AG04449 (cell line): ENCODE measurements at regions of chr3 and their contacts with region 1.

Region 1: GRCh38 chr3:141575879-141576743 is 89.3 kb downstream of the RASA2 start:
- DNase-seq: no peak
- H3K4me3 ChIP-seq: no peak overlapping the region
- CTCF ChIP-seq: peak; percentile 51

Region 2: GRCh38 chr3:141594357-141594756 is 18.2 kb after region 1 on chr3:
- CTCF ChIA-PET with region 1: interaction called, 22 read pairs
- POLR2A ChIA-PET with region 1: no interaction called
- DNase-seq: no peak
- H3K4me3 ChIP-seq: no peak overlapping the region
- CTCF ChIP-seq: no peak